ENCODE measurements at regions of chr9 and their contacts with region 1.

Region 1: GRCh38 chr9:68999393-69000105 is 14.4 kb downstream of the PRKACG start:
- DNase-seq: no peak
- ATAC-seq: peak; percentile 87

Region 2: GRCh38 chr9:68584189-68585033 is 415.1 kb before region 1 on chr9:
- intact Hi-C with region 1: loop called (anchors 2 kb)
- DNase-seq: peak; percentile 90
- ATAC-seq: peak; percentile 97

Region 3: GRCh38 chr9:68779558-68780384 is 219.8 kb before region 1 on chr9:
- intact Hi-C with region 1: loop called (anchors 5 kb)
- DNase-seq: peak; percentile 98
- ATAC-seq: peak; percentile 95

Region 4: DNA sequence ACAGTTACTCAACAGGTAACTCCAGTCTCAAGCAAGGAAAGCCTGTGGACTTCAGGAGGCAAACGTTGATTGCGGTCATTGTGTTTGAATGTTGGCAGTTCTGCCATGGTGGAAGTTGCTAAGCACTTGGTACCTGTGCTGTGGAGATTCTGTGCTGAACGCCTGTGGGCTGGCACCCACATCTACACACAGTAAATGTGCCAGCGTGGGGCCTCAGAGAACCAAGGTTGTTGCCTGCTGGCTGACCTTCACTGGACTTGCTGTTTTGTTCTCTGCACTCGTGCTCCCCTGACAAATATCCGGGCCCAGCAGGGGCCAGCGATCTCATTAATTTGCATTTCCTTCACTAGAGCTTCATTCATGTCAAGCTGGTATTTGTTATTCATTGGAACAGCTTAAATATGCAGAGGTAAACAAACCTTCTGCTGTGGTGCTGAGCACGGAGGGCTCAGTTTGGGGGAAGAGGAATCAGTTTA is 127.5 kb before region 1 on chr9:
- intact Hi-C with region 1: loop called (anchors 5 kb)
- DNase-seq: peak; percentile 73
- ATAC-seq: peak; percentile 95

Region 5: GRCh38 chr9:69056191-69056815 is 56.8 kb after region 1 on chr9:
- intact Hi-C with region 1: no loop called
- DNase-seq: no peak
- ATAC-seq: no peak

Measured in Right ventricle myocardium inferior (tissue), 1 donor.